Activated T-helper 2 cell treated with anti-CD3 and anti-CD28 coated beads, Interferon-gamma antibody, Interleukin-2, Interleukin-4, amounts not matched to agents 10 μg/mL and 5 μg/mL and 100 μg/mL, durations not matched to agents 14 hours and 24 hours and 36 hours (primary cell): ENCODE measurements at regions of chr17 and their contacts with region 1.

Region 1: GRCh38 chr17:32882734-32883133 is 5.8 kb upstream of the MYO1D start:
- DNase-seq: no peak
- H3K4me3 Mint-ChIP-seq: no peak overlapping the region
- H3K27ac Mint-ChIP-seq: peak overlapping the region; percentile 61
- H3K4me1 Mint-ChIP-seq: peaks cover 34% of the 10 kb centered on the region
- H3K27me3 Mint-ChIP-seq: peaks cover 25% of the 10 kb centered on the region

Region 2: GRCh38 chr17:32588982-32589381 is 293.8 kb before region 1 on chr17:
- intact Hi-C with region 1: no loop called
- DNase-seq: no peak
- H3K4me3 Mint-ChIP-seq: no peak overlapping the region
- H3K27ac Mint-ChIP-seq: no peak overlapping the region
- H3K4me1 Mint-ChIP-seq: no peaks in the 10 kb centered on the region
- H3K27me3 Mint-ChIP-seq: no peaks in the 10 kb centered on the region

Region 3: DNA sequence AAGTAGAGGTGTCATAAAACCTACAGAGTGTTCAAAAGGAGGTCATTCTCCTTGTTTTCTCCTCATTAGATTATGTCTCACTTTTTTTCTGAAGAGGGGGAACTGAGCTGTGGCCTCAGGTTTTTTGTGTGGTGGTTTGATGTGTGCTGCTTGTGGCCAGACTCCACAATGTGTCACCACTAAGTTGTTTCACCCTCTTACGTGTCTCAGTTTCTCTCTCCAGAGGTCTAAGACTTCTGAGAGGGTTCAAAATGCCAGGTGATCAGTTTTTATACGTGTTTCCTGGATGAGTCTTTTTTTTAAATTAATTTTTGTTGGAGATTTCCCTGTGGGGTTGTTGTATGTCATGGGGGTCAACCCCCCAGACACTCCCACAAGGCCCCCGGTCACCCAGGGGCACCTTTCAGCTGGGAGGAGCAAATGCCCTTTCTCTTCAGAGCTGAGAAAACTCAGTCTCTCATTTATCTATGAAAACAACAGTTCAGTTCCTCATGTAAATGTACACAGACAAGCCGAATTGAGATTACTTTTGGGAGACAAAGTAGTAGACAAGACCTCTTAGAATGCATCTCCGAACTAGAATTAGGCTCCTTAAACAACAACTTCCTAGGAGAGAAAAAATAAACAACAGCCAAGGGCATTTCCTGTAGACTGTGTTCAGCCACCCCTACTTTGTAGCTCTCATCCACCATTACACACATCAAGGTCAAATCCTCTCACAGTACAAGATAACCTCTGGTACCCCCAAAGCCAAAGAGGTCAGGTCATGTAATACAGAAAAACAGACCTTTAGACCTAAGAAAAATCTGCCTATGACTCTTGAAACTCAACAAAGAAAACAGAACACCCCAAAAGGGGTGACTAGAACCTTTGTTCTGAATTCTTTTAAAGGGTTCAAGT is 21.3 kb after region 1 on chr17:
- intact Hi-C with region 1: loop called (anchors 2 kb)
- DNase-seq: no peak
- H3K4me3 Mint-ChIP-seq: no peak overlapping the region
- H3K27ac Mint-ChIP-seq: peak overlapping the region; percentile 79
- H3K4me1 Mint-ChIP-seq: peaks cover 28% of the 10 kb centered on the region
- H3K27me3 Mint-ChIP-seq: peaks cover 2% of the 10 kb centered on the region